Naive thymus-derived CD4-positive, alpha-beta T cell (primary cell): ENCODE measurements at regions of chr6 and their contacts with region 1.

Region 1: DNA sequence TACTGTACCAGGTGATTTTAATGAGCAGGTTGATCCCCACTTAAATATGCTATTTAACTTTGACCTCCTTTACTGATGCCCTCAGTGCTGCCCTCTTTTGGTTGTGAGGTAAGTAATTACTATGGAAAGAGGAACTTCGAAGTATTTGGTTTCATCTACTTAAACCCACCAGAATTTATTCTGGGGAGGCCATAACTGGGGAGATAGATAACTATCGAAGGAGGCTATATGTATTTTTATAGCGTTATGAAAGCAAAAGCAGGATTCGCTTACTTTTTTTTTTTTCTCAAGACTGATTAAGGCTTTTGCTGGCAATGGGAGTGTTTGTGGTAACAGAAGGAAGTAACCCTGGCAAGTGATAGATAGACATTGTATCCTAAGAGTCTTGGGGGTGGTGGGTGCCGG is 168.9 kb upstream of the CENPW start:
- DNase-seq: peak in 5 of 9 donors; percentile 3 to 11 (median 8)
- ATAC-seq: peak; percentile 67
- H3K4me3 ChIP-seq: no peak overlapping the region
- H3K4me3 Mint-ChIP-seq: peak overlapping the region in 5 of 10 donors; percentile 4 to 65 (median 9)
- H3K27ac ChIP-seq: no peak overlapping the region
- H3K27ac Mint-ChIP-seq: no peak overlapping the region
- H3K4me1 ChIP-seq: peaks cover 0 to 4% of the 10 kb centered on the region in 2 donors
- H3K4me1 Mint-ChIP-seq: peaks cover 0 to 8% (median 5%) of the 10 kb centered on the region in 7 donors
- H3K27me3 ChIP-seq: no peaks in the 10 kb centered on the region
- H3K27me3 Mint-ChIP-seq: peaks cover 0 to 2% (median 0%) of the 10 kb centered on the region in 5 donors

Region 2: GRCh38 chr6:125314019-125314581 is 856.9 kb before region 1 on chr6:
- CTCF ChIA-PET with region 1: no interaction called
- POLR2A ChIA-PET with region 1: no interaction called
- intact Hi-C with region 1: loop called in 1 of 2 experiments (anchors 1 kb)
- DNase-seq: peak in 3 of 9 donors; percentile 17 to 27 (median 22)
- ATAC-seq: peak; percentile 76
- H3K4me3 ChIP-seq: no peak overlapping the region
- H3K4me3 Mint-ChIP-seq: no peak overlapping the region
- H3K27ac ChIP-seq: no peak overlapping the region
- H3K27ac Mint-ChIP-seq: no peak overlapping the region
- H3K4me1 ChIP-seq: no peaks in the 10 kb centered on the region
- H3K4me1 Mint-ChIP-seq: peaks cover 0 to 2% (median 0%) of the 10 kb centered on the region in 7 donors
- H3K27me3 ChIP-seq: peaks cover 0 to 6% of the 10 kb centered on the region in 2 donors
- H3K27me3 Mint-ChIP-seq: peaks cover 0 to 22% (median 4%) of the 10 kb centered on the region in 5 donors

Region 3: GRCh38 chr6:126033696-126034095 is 137.3 kb before region 1 on chr6:
- CTCF ChIA-PET with region 1: no interaction called
- POLR2A ChIA-PET with region 1: no interaction called
- intact Hi-C with region 1: loop called in 1 of 2 experiments (anchors 5 kb)
- DNase-seq: peak in 1 of 9 donors; percentile 2
- ATAC-seq: peak; percentile 57
- H3K4me3 ChIP-seq: no peak overlapping the region
- H3K4me3 Mint-ChIP-seq: no peak overlapping the region
- H3K27ac ChIP-seq: no peak overlapping the region
- H3K27ac Mint-ChIP-seq: peak overlapping the region in 1 of 9 donors; percentile 47
- H3K4me1 ChIP-seq: no peaks in the 10 kb centered on the region
- H3K4me1 Mint-ChIP-seq: peaks cover 0 to 7% (median 5%) of the 10 kb centered on the region in 7 donors
- H3K27me3 ChIP-seq: no peaks in the 10 kb centered on the region
- H3K27me3 Mint-ChIP-seq: no peaks in the 10 kb centered on the region

Region 4: GRCh38 chr6:126344181-126344580 is 173.2 kb after region 1 on chr6:
- CTCF ChIA-PET with region 1: no interaction called
- POLR2A ChIA-PET with region 1: no interaction called
- intact Hi-C with region 1: no loop called
- DNase-seq: no peak
- ATAC-seq: no peak
- H3K4me3 ChIP-seq: no peak overlapping the region
- H3K4me3 Mint-ChIP-seq: no peak overlapping the region
- H3K27ac ChIP-seq: no peak overlapping the region
- H3K27ac Mint-ChIP-seq: no peak overlapping the region
- H3K4me1 ChIP-seq: peaks cover 6 to 12% of the 10 kb centered on the region in 2 donors
- H3K4me1 Mint-ChIP-seq: peaks cover 5 to 21% (median 12%) of the 10 kb centered on the region in 7 donors
- H3K27me3 ChIP-seq: no peaks in the 10 kb centered on the region
- H3K27me3 Mint-ChIP-seq: no peaks in the 10 kb centered on the region